CD4-positive, alpha-beta memory T cell (primary cell): ENCODE measurements at regions of chr19 and their contacts with region 1.

Region 1: GRCh38 chr19:34041925-34042521 is 130.3 kb upstream of the LSM14A start:
- DNase-seq: peak; percentile 41 to 61 (median 45)
- H3K4me3 ChIP-seq: no peak overlapping the region
- H3K4me3 Mint-ChIP-seq: no peak overlapping the region
- H3K27ac ChIP-seq: no peak overlapping the region
- H3K27ac Mint-ChIP-seq: no peak overlapping the region
- H3K4me1 ChIP-seq: no peaks in the 10 kb centered on the region
- H3K4me1 Mint-ChIP-seq: peaks cover 0 to 2% (median 0%) of the 10 kb centered on the region in 4 donors
- H3K27me3 ChIP-seq: no peaks in the 10 kb centered on the region
- H3K27me3 Mint-ChIP-seq: peaks cover 7 to 23% of the 10 kb centered on the region in 2 donors

Region 2: GRCh38 chr19:34712395-34713261 is 670.6 kb after region 1 on chr19:
- CTCF ChIA-PET with region 1: no interaction called
- POLR2A ChIA-PET with region 1: no interaction called
- intact Hi-C with region 1: loop called (anchors 10 kb)
- DNase-seq: peak; percentile 64 to 74 (median 71)
- H3K4me3 ChIP-seq: no peak overlapping the region
- H3K4me3 Mint-ChIP-seq: no peak overlapping the region
- H3K27ac ChIP-seq: no peak overlapping the region
- H3K27ac Mint-ChIP-seq: no peak overlapping the region
- H3K4me1 ChIP-seq: no peaks in the 10 kb centered on the region
- H3K4me1 Mint-ChIP-seq: peaks cover 0 to 1% (median under 1%) of the 10 kb centered on the region in 4 donors
- H3K27me3 ChIP-seq: no peaks in the 10 kb centered on the region
- H3K27me3 Mint-ChIP-seq: peaks cover 15 to 17% of the 10 kb centered on the region in 2 donors